ENCODE measurements at regions of chr9 and their contacts with region 1.

Region 1: DNA sequence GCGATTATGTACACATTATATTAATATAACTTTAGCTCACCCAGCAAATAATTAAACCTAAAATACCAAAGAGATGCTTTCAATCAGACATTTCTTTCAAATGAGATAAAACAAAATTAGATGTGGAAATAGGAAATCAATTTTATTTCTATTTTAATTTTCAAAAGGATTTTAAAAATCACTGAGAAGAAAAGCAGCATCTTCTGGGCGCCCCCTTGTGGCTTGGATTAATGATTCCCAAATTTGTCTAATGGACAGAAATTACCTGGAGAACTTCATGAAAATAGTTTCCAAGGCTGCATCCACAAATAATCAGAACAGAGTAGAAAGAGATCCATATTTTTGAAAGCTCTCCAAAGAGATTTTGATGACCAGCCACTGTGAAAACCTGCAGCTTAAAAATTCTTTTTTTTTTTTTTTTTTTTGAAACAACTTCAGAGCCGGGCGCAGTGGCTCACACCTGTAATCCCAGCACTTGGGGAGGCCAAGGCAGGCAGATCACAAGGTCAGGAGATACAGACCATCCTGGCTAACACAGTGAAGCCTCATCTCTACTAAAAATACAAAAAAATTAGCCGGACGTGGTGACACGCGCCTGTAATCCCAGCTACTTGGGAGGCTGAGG is 50.9 kb upstream of the CEMIP2 start:
- DNase-seq: peak in 6 of 7 donors; percentile 34 to 67 (median 51)
- H3K4me3 ChIP-seq: no peak overlapping the region
- H3K27ac ChIP-seq: no peak overlapping the region
- H3K4me1 ChIP-seq: no peaks in the 10 kb centered on the region
- H3K27me3 ChIP-seq: no peaks in the 10 kb centered on the region
- CTCF ChIP-seq: peak; percentile 49 to 86 (median 69)
- POLR2A ChIP-seq: no peak

Region 2: DNA sequence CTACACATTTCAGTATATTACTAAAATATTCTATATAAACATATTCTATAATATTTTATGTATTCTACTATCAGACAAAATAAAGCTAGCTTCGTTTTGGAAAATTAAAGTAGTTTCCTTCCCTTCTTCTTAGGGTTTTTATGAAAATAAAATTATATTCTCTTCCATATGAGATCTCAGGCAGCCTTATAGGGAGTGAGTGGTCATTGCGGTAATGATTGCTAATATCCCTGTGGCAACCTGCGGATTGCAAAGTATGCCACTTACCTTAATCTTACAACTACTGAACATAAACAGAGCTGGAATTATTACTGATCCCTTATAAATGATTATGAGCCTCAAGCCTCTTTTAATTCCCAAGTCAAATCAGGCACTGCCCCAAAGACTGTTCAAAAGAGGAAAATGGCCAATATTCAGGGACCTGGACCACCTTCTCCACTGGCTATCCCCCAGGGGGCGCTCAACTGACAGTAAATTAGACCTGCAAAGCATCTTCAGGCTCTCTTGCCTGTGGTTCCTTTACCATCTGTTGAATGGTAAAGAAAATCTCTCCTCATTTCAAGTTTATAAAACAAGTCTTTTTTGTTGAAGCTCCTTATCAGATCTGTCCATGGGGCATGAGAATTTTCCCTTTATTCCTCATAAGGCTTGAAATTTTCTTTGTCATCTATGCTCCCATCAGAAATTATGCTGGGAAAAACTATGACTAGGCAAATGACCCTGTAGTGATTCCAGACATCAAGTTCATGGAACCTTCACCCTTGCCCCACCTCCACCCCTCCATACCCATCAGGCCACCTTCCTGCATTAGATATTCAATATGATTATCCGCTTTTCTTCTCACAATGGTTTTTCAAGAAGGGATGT is 214.8 kb before region 1 on chr9:
- intact Hi-C with region 1: loop called in 1 of 2 experiments (anchors 5 kb)
- DNase-seq: peak; percentile 70 to 88 (median 83)
- H3K4me3 ChIP-seq: no peak overlapping the region
- H3K27ac ChIP-seq: no peak overlapping the region
- H3K4me1 ChIP-seq: no peaks in the 10 kb centered on the region
- H3K27me3 ChIP-seq: no peaks in the 10 kb centered on the region
- CTCF ChIP-seq: peak; percentile 62 to 84 (median 78)
- POLR2A ChIP-seq: no peak

Region 3: DNA sequence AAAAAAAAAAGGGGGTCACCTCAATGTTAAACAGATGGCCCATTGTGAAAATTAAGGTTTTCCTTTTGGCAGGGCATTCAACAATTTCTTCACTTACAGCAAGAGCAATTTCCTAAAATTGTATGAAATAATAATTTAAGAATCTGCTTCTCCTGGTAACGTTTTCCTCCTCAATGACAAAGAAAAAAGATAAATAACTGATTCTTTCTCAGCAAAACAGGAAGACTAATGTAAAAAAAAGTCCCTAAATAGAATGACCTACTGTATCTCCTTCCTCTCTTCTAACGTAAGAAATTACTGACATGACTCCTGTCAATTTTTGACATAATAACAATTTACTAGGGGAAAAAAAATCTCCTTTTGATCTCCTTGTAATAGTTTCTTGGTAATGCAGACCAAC is 66.2 kb after region 1 on chr9:
- intact Hi-C with region 1: no loop called
- DNase-seq: no peak
- H3K4me3 ChIP-seq: no peak overlapping the region
- H3K27ac ChIP-seq: no peak overlapping the region
- H3K4me1 ChIP-seq: no peaks in the 10 kb centered on the region
- H3K27me3 ChIP-seq: no peaks in the 10 kb centered on the region
- CTCF ChIP-seq: no peak
- POLR2A ChIP-seq: no peak

Region 4: DNA sequence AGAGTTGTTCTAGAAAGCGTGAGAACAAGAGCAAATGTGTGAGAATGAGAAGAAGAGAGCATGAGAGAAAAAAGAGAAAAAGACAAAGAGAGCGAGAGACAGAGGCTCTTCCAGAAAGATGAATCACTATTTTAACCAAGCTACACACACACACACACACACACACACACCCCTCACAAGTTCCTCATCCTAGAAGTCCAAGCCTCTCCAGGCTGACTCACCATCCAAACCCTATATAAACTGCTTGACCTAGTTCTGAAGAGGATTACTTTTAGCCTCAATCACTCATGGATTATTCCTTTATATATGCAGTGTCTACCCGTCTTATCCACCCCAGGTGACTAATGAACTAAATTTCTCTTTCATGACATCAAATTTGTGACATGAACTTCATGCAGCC is 203.6 kb after region 1 on chr9:
- intact Hi-C with region 1: loop called in 1 of 2 experiments (anchors 5 kb)
- DNase-seq: peak in 1 of 7 donors; percentile 30
- H3K4me3 ChIP-seq: no peak overlapping the region
- H3K27ac ChIP-seq: no peak overlapping the region
- H3K4me1 ChIP-seq: no peaks in the 10 kb centered on the region
- H3K27me3 ChIP-seq: no peaks in the 10 kb centered on the region
- CTCF ChIP-seq: no peak
- POLR2A ChIP-seq: no peak

Region 5: DNA sequence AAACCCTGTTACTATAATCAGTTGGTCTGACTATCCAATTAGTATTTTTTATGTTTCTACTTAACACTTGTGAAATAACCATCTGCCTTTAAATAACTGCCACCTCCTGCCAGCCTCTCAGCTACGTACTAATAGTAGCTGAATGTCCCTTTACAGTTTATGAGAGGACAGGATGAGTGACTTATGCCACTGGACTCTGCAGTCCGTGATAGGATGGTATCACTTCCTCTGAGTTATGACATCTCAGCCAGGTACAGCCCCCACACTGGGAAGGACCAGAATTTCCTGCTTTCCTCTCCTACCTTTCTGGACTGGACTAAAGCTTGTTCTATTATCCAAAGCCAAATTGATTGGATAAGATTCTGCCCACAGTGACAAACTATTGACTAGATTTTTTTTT is 442.8 kb after region 1 on chr9:
- intact Hi-C with region 1: loop called in 1 of 2 experiments (anchors 10 kb)
- DNase-seq: no peak
- H3K4me3 ChIP-seq: no peak overlapping the region
- H3K27ac ChIP-seq: no peak overlapping the region
- H3K4me1 ChIP-seq: no peaks in the 10 kb centered on the region
- H3K27me3 ChIP-seq: peaks cover under 1% of the 10 kb centered on the region
- CTCF ChIP-seq: no peak
- POLR2A ChIP-seq: no peak